HCT116 (cell line): ENCODE measurements at regions of chr12 and their contacts with region 1.

Region 1: DNA sequence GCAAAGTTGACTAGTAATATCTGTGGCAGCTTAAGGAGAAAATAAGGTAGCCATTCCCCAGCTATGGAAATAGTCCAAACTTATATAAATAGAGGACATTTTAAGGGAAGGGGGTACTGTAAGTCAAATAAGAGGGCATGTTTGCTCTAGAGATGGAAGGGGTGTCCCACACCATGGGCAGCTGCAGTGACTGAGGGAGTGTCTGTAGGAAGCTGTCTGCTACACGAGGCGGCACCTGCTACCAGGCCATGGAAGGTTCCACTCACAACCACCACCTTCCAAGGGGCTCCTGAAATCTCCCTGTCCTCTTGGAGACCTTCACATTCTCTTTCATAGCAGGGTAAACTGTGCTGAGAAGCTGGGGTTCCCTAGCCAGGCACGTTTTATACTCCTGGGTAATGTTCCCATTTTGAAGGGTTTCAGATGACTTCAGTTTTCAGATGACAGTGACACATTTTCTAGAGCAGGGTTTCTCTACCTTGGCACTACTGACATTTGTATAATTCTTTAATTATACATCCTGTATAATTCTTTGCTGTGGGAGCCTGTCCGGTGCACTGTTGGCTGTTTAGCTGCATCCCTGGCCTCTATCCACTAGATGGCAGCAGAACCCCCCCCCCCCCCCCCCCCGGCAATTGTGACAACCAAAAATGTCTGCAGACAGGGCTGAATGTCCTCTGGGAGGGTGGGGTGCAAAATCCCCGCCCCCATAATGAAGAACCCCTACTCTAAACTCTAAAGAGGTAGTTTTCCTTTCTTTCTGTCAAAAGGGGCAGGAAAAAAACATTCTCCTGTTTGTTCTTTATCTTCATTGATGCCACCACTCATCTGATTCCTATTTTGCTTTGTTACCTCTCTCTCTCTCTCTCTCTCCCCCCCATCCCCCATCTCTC is 11.6 kb upstream of the SMCO2 start:
- DNase-seq: no peak
- ATAC-seq: peak; percentile 88
- H3K4me3 ChIP-seq: no peak overlapping the region
- H3K27ac ChIP-seq: no peak overlapping the region
- H3K4me1 ChIP-seq: peaks cover 8 to 12% of the 10 kb centered on the region in 2 experiments; a peak in 3 of 4 replicates
- H3K27me3 ChIP-seq: no peaks in the 10 kb centered on the region
- CTCF ChIP-seq: peak; percentile 79 to 91 (median 86)
- POLR2A ChIP-seq: no peak
- RAD21 ChIP-seq: peak; percentile 82

Region 2: GRCh38 chr12:26791301-26791791 is 643.6 kb before region 1 on chr12:
- CTCF ChIA-PET with region 1: no interaction called
- POLR2A ChIA-PET with region 1: no interaction called
- RAD21 ChIA-PET with region 1: no interaction called
- intact Hi-C with region 1: no loop called
- DNase-seq: no peak
- ATAC-seq: no peak
- H3K4me3 ChIP-seq: no peak overlapping the region
- H3K27ac ChIP-seq: no peak overlapping the region
- H3K4me1 ChIP-seq: no peaks in the 10 kb centered on the region; a peak in 1 of 4 replicates
- H3K27me3 ChIP-seq: no peaks in the 10 kb centered on the region
- CTCF ChIP-seq: no peak
- POLR2A ChIP-seq: no peak
- RAD21 ChIP-seq: no peak

Region 3: DNA sequence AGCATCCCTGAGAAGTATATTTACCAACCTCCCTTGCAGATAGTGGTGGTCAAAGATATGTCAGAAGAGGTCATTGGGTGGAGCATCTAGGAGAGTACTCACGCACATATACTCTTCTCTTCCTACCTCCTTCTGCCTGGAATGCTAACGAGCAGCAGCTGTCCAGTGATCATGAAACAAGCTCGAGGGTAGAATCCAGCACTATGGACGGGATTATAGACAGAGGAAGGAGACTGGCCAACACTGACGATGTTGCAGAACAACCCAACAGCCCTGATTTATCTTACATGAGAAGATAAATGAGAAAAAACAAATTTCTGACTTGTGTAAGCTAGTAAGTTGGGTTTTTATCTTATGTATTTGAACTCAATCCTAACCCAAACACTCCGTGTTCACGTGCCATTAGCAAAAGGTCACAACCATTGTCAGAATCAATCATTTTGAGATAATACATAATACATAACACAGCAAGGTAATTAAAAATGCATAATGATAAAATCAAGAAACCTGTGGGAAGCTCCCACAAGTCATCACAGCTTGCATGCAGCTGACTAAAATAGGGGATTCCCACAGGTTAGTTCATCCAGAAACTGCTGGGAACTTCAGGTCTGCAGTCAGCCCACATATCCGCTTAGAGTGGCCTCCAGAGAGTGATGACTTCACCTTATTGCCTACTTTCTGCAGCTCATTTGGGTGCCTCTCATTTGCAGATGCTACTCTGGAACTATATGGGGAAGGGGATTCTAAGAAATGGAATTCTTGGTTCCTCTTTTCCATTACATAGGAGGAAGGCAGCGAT is 227.1 kb before region 1 on chr12:
- CTCF ChIA-PET with region 1: no interaction called
- POLR2A ChIA-PET with region 1: no interaction called
- RAD21 ChIA-PET with region 1: no interaction called
- intact Hi-C with region 1: no loop called
- DNase-seq: no peak
- ATAC-seq: no peak
- H3K4me3 ChIP-seq: no peak overlapping the region
- H3K27ac ChIP-seq: no peak overlapping the region
- H3K4me1 ChIP-seq: no peaks in the 10 kb centered on the region
- H3K27me3 ChIP-seq: no peaks in the 10 kb centered on the region
- CTCF ChIP-seq: no peak
- POLR2A ChIP-seq: no peak
- RAD21 ChIP-seq: no peak

Region 4: GRCh38 chr12:27424631-27425230 is 10.2 kb before region 1 on chr12:
- CTCF ChIA-PET with region 1: interaction called, 12 read pairs
- POLR2A ChIA-PET with region 1: no interaction called
- RAD21 ChIA-PET with region 1: no interaction called
- intact Hi-C with region 1: no loop called
- DNase-seq: peak; percentile 49
- ATAC-seq: peak; percentile 92
- H3K4me3 ChIP-seq: no peak overlapping the region
- H3K27ac ChIP-seq: no peak overlapping the region
- H3K4me1 ChIP-seq: no peaks in the 10 kb centered on the region
- H3K27me3 ChIP-seq: no peaks in the 10 kb centered on the region
- CTCF ChIP-seq: peak; percentile 42 to 60 (median 60); a peak in 5 of 6 replicates
- POLR2A ChIP-seq: no peak
- RAD21 ChIP-seq: peak; percentile 58

Region 5: GRCh38 chr12:27635349-27635972 is 200.5 kb after region 1 on chr12:
- CTCF ChIA-PET with region 1: interaction called, 6 read pairs
- POLR2A ChIA-PET with region 1: no interaction called
- RAD21 ChIA-PET with region 1: interaction called in 1 of 2 experiments, 4 read pairs
- intact Hi-C with region 1: loop called (anchors 1 kb)
- DNase-seq: peak; percentile 44
- ATAC-seq: no peak
- H3K4me3 ChIP-seq: no peak overlapping the region
- H3K27ac ChIP-seq: no peak overlapping the region
- H3K4me1 ChIP-seq: peaks cover 3 to 7% of the 10 kb centered on the region in 2 experiments; a peak in 1 of 4 replicates
- H3K27me3 ChIP-seq: no peaks in the 10 kb centered on the region
- CTCF ChIP-seq: peak; percentile 57 to 76 (median 65)
- POLR2A ChIP-seq: no peak
- RAD21 ChIP-seq: peak; percentile 85

Region 6: GRCh38 chr12:27652174-27652763 is 217.3 kb after region 1 on chr12:
- CTCF ChIA-PET with region 1: interaction called, 3 read pairs
- POLR2A ChIA-PET with region 1: no interaction called
- RAD21 ChIA-PET with region 1: no interaction called
- intact Hi-C with region 1: loop called (anchors 1 kb)
- DNase-seq: peak; percentile 58
- ATAC-seq: peak; percentile 78
- H3K4me3 ChIP-seq: no peak overlapping the region
- H3K27ac ChIP-seq: no peak overlapping the region; the same call in 1 of the 2 replicates
- H3K4me1 ChIP-seq: no peaks in the 10 kb centered on the region
- H3K27me3 ChIP-seq: no peaks in the 10 kb centered on the region
- CTCF ChIP-seq: peak; percentile 68 to 87 (median 82); a peak in 5 of 6 replicates
- POLR2A ChIP-seq: no peak
- RAD21 ChIP-seq: peak; percentile 83